Heart left ventricle (tissue), 16 donors: ENCODE measurements at regions of chr6 and their contacts with region 1.

Region 1: DNA sequence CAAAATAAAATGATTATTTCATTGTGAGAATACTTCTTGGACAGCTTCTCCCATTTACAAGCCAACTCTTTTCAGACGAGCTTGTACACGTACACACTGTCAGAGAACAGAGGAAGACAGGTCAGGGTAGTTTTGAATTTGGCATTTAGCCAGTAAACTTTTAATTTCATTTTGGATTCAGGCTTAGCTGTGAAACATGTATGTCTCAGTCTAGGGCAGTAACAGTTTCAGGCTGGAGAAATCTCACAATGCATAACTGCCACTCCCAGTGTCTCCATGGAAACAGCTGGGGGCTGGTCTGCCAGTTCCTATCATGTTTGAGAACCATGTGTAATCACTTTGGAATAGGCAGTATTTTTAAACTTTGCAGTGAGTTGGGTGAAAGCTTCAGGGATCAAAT is 22.0 kb upstream of the QKI start:
- DNase-seq: peak in 4 of 5 donors; percentile 48 to 60 (median 54)
- ATAC-seq: peak; percentile 57 to 76 (median 74)
- H3K4me3 ChIP-seq: no peak overlapping the region
- H3K27ac ChIP-seq: peak overlapping the region in 3 of 12 donors; percentile 7 to 29 (median 9)
- H3K4me1 ChIP-seq: peaks cover 0 to 35% (median 19%) of the 10 kb centered on the region in 12 donors
- H3K27me3 ChIP-seq: no peaks in the 10 kb centered on the region
- CTCF ChIP-seq: no peak
- POLR2A ChIP-seq: no peak

Region 2: GRCh38 chr6:163218361-163218894 is 174.1 kb before region 1 on chr6:
- intact Hi-C with region 1: no loop called
- DNase-seq: no peak
- ATAC-seq: peak in 3 of 4 donors; percentile 9 to 67 (median 22)
- H3K4me3 ChIP-seq: no peak overlapping the region
- H3K27ac ChIP-seq: no peak overlapping the region
- H3K4me1 ChIP-seq: peaks cover 0 to 47% (median 5%) of the 10 kb centered on the region in 12 donors
- H3K27me3 ChIP-seq: no peaks in the 10 kb centered on the region
- CTCF ChIP-seq: no peak
- POLR2A ChIP-seq: no peak

Region 3: DNA sequence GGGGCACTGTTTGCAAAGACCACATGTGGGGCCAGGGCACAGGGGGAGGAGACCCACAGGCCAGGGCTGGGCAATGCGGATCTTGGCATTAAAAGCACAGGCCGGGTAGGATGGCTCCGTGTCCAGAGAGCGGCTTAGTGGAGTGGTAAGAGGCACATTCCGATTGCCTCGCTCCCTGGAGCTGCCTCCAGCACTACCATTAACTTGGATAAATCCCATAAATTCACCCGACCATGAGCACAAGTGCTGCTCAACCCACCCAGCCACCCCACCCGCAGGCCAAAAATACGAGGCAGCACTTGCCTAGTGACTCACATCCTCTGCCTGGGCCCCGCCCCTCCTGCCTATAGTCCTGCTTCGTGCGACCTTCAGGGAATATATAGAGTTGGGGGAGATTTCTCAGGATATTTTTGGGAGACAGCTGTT is 45.5 kb before region 1 on chr6:
- intact Hi-C with region 1: loop called in 1 of 10 experiments (anchors 10 kb)
- DNase-seq: peak in 1 of 5 donors; percentile 42
- ATAC-seq: peak in 3 of 4 donors; percentile 26 to 44 (median 33)
- H3K4me3 ChIP-seq: peak overlapping the region in 1 of 12 donors; percentile 28
- H3K27ac ChIP-seq: peak overlapping the region in 6 of 12 donors; percentile 30 to 71 (median 64)
- H3K4me1 ChIP-seq: peaks cover 0 to 35% (median 18%) of the 10 kb centered on the region in 12 donors
- H3K27me3 ChIP-seq: no peaks in the 10 kb centered on the region
- CTCF ChIP-seq: no peak
- POLR2A ChIP-seq: no peak

Region 4: GRCh38 chr6:163355426-163355991 is 37.0 kb before region 1 on chr6:
- intact Hi-C with region 1: loop called in 2 of 10 experiments (anchors 5 kb)
- DNase-seq: peak; percentile 77 to 87 (median 86)
- ATAC-seq: peak; percentile 74 to 91 (median 86)
- H3K4me3 ChIP-seq: peak overlapping the region in 9 of 12 donors; percentile 17 to 36 (median 27)
- H3K27ac ChIP-seq: peak overlapping the region; percentile 54 to 97 (median 78)
- H3K4me1 ChIP-seq: peaks cover 3 to 52% (median 25%) of the 10 kb centered on the region in 12 donors
- H3K27me3 ChIP-seq: no peaks in the 10 kb centered on the region
- CTCF ChIP-seq: no peak
- POLR2A ChIP-seq: peak in 1 of 2 donors; percentile 15